HepG2 (cell line): ENCODE measurements at regions of chr18 and their contacts with region 1.

Region 1: GRCh38 chr18:74368901-74369705 is 53.5 kb downstream of the C18orf63 start:
- DNase-seq: peak; percentile 70
- ATAC-seq: peak; percentile 87
- H3K4me3 ChIP-seq: peak overlapping the region; percentile 31 to 51 (median 46)
- H3K27ac ChIP-seq: peak overlapping the region; percentile 38
- H3K4me1 ChIP-seq: peaks cover 29% of the 10 kb centered on the region
- H3K27me3 ChIP-seq: peaks cover 2 to 5% of the 10 kb centered on the region in 2 experiments; a peak in 2 of 5 replicates
- CTCF ChIP-seq: no peak
- EP300 ChIP-seq: no peak
- POLR2A ChIP-seq: no peak
- RAD21 ChIP-seq: no peak

Region 2: DNA sequence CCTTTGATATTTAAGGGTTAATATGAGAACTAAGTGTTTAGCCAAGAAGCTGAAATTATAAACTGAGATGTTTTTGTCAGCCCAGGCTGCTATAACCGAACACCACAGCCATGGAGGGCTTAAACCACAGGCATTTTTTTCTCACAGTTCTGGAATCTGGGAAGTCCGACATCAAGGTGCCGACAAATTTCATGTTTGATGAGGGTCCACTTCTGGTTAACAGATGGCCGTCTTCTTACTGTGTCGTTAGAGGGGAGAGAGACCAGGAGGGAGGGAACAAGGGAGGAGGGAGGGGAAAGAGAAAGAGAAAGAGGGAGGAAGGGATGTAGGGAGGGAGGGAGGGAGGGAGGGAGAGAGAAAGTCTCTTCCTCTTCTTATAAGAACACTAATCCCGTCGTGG is 120.6 kb after region 1 on chr18:
- CTCF ChIA-PET with region 1: no interaction called
- POLR2A ChIA-PET with region 1: no interaction called
- in situ Hi-C with region 1: loop called (anchors 5 kb)
- intact Hi-C with region 1: no loop called
- DNase-seq: no peak
- ATAC-seq: no peak
- H3K4me3 ChIP-seq: no peak overlapping the region
- H3K27ac ChIP-seq: no peak overlapping the region
- H3K4me1 ChIP-seq: peaks cover 22% of the 10 kb centered on the region
- H3K27me3 ChIP-seq: peaks cover 1 to 2% of the 10 kb centered on the region in 2 experiments; a peak in 2 of 5 replicates
- CTCF ChIP-seq: no peak
- EP300 ChIP-seq: no peak
- POLR2A ChIP-seq: no peak
- RAD21 ChIP-seq: no peak